ENCODE measurements at regions of chr5 and their contacts with region 1.

Region 1: GRCh38 chr5:135950611-135951010 is 4.2 kb downstream of the LECT2 start:
- DNase-seq: no peak
- ATAC-seq: no peak
- H3K4me3 ChIP-seq: no peak overlapping the region
- H3K27ac ChIP-seq: no peak overlapping the region
- H3K4me1 ChIP-seq: no peaks in the 10 kb centered on the region
- H3K27me3 ChIP-seq: no peaks in the 10 kb centered on the region
- CTCF ChIP-seq: no peak
- EP300 ChIP-seq: no peak
- POLR2A ChIP-seq: no peak
- RAD21 ChIP-seq: no peak

Region 2: GRCh38 chr5:135386886-135387628 is 563.6 kb before region 1 on chr5:
- CTCF ChIA-PET with region 1: no interaction called
- POLR2A ChIA-PET with region 1: no interaction called
- RAD21 ChIA-PET with region 1: no interaction called
- SMC1A ChIA-PET with region 1: no interaction called
- in situ Hi-C with region 1: no loop called
- intact Hi-C with region 1: no loop called
- DNase-seq: no peak
- ATAC-seq: no peak
- H3K4me3 ChIP-seq: no peak overlapping the region
- H3K27ac ChIP-seq: no peak overlapping the region
- H3K4me1 ChIP-seq: peaks cover 3% of the 10 kb centered on the region; the same call in 1 of the 2 replicates
- H3K27me3 ChIP-seq: no peaks in the 10 kb centered on the region
- CTCF ChIP-seq: no peak
- EP300 ChIP-seq: no peak
- POLR2A ChIP-seq: no peak
- RAD21 ChIP-seq: no peak

Region 3: DNA sequence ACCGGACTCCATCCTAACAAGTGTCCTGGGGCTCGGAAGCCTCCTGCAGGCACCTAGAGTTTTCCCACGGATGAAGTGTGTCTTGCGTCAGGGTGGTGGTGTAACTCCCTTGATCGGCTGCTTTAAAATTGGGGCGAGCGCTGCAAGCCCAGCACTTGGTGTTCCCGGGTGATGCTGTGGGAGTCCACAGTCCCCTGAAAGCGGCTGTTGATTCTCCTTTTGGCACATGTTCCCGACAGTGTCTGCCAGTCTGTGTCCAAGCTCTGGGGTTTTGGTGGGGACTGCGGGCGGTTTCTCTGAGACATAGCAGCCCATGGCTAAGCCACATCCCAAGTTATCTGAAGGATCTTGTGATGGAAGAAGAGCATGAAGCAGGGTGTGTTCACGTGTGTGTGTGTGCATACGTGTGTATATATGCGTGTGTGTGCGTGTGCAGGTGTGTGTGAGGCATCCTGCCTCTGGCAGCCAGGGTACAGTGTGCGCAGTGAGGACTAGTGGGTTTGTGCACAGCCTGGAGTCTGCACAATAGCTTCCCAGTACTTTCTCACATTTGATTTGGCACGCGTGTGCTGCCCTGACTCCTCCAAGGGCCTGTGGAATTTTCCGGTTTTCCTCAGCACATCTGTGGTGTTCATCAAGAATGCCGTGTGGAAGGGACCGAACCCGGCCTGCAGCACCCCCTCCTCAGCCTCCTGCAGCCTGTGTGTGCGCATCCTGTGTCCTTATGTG is 99.3 kb before region 1 on chr5:
- CTCF ChIA-PET with region 1: no interaction called
- POLR2A ChIA-PET with region 1: no interaction called
- RAD21 ChIA-PET with region 1: no interaction called
- SMC1A ChIA-PET with region 1: no interaction called
- in situ Hi-C with region 1: no loop called
- intact Hi-C with region 1: no loop called
- DNase-seq: no peak
- ATAC-seq: no peak
- H3K4me3 ChIP-seq: no peak overlapping the region
- H3K27ac ChIP-seq: no peak overlapping the region
- H3K4me1 ChIP-seq: no peaks in the 10 kb centered on the region
- H3K27me3 ChIP-seq: peaks cover 3 to 4% of the 10 kb centered on the region in 2 experiments; a peak in 3 of 4 replicates
- CTCF ChIP-seq: no peak
- EP300 ChIP-seq: no peak
- POLR2A ChIP-seq: no peak
- RAD21 ChIP-seq: no peak

Region 4: GRCh38 chr5:135964670-135965320 is 14.2 kb after region 1 on chr5:
- CTCF ChIA-PET with region 1: interaction called, 11 read pairs
- POLR2A ChIA-PET with region 1: no interaction called
- RAD21 ChIA-PET with region 1: interaction called, 3 read pairs
- SMC1A ChIA-PET with region 1: interaction called, 9 read pairs
- in situ Hi-C with region 1: no loop called
- intact Hi-C with region 1: no loop called
- DNase-seq: no peak
- ATAC-seq: peak; percentile 45
- H3K4me3 ChIP-seq: no peak overlapping the region
- H3K27ac ChIP-seq: no peak overlapping the region
- H3K4me1 ChIP-seq: no peaks in the 10 kb centered on the region
- H3K27me3 ChIP-seq: peaks cover 0 to 5% of the 10 kb centered on the region in 2 experiments; a peak in 1 of 4 replicates
- CTCF ChIP-seq: no peak
- EP300 ChIP-seq: no peak
- POLR2A ChIP-seq: no peak
- RAD21 ChIP-seq: no peak

Measured in GM12878 (cell line).